ENCODE measurements at regions of chr9 and their contacts with region 1.

Region 1: DNA sequence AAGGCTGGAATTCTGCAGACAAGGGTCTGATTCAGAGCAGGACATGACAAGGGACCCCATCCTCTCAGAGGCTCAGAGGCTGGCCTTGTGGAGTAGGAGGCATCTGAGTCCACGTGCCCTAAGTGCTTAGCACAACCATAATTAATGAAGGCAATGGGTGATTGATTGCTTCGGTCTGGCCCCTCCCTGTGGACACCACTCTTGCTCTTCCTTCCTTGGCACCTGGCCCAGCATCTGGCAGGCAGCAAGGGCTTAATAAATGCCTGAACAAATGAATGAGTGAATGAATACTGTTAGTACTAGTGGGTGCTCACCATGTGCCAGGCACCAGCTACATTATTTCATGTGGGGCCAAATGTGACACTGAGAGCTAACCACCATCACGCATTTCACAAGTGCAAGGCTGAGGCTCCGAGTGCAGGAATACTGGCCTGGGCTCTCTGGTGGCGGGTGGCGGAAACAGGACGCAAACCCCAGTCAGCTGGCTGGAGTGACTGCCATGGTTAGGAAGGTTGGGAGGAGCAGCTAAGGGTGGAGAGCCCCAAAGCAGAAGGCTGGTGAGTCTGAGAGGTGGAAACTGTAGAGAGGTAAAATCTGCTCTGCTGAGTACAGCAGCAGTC is 53.6 kb downstream of the ASS1 start:
- DNase-seq: peak; percentile 26
- ATAC-seq: no peak
- H3K4me3 ChIP-seq: peak overlapping the region in 1 of 3 experiments; percentile 65; a peak in 1 of 6 replicates
- H3K27ac ChIP-seq: peak overlapping the region; percentile 95
- H3K4me1 ChIP-seq: peaks cover 42% of the 10 kb centered on the region
- H3K27me3 ChIP-seq: no peaks in the 10 kb centered on the region
- CTCF ChIP-seq: no peak
- EP300 ChIP-seq: no peak
- POLR2A ChIP-seq: no peak
- RAD21 ChIP-seq: no peak; the same call in 1 of the 2 replicates

Region 2: GRCh38 chr9:130461218-130461630 is 37.2 kb before region 1 on chr9:
- CTCF ChIA-PET with region 1: no interaction called
- POLR2A ChIA-PET with region 1: no interaction called
- in situ Hi-C with region 1: no loop called
- intact Hi-C with region 1: no loop called
- DNase-seq: peak; percentile 28
- ATAC-seq: peak; percentile 72
- H3K4me3 ChIP-seq: no peak overlapping the region
- H3K27ac ChIP-seq: no peak overlapping the region
- H3K4me1 ChIP-seq: peaks cover 12% of the 10 kb centered on the region
- H3K27me3 ChIP-seq: no peaks in the 10 kb centered on the region
- CTCF ChIP-seq: peak; percentile 99
- EP300 ChIP-seq: no peak
- POLR2A ChIP-seq: no peak
- RAD21 ChIP-seq: peak; percentile 98

Region 3: DNA sequence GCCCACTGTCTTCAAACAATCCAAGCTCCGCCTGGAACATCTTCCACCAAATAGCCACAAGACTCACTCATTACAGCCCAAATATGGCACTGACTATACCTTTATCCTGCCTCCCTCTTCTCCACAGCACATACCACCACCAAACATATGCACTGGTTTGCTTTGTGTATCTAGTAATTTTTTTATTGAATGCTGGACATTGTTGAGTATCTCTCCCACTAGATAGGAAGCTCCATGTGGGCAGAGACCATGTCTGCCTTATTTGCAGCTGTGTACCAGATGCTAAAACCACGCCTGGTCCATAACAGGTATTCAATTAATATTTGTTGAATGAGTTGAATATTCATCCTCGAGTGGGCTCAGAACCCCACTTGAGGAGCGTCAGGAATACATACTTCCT is 13.8 kb after region 1 on chr9:
- CTCF ChIA-PET with region 1: no interaction called
- POLR2A ChIA-PET with region 1: interaction called, 21 read pairs
- in situ Hi-C with region 1: no loop called
- intact Hi-C with region 1: no loop called
- DNase-seq: no peak
- ATAC-seq: no peak
- H3K4me3 ChIP-seq: no peak overlapping the region
- H3K27ac ChIP-seq: no peak overlapping the region
- H3K4me1 ChIP-seq: peaks cover 2% of the 10 kb centered on the region; the same call in 1 of the 2 replicates
- H3K27me3 ChIP-seq: peaks cover 2 to 3% of the 10 kb centered on the region in 2 experiments; a peak in 4 of 5 replicates
- CTCF ChIP-seq: no peak
- EP300 ChIP-seq: no peak
- POLR2A ChIP-seq: no peak
- RAD21 ChIP-seq: no peak

Region 4: DNA sequence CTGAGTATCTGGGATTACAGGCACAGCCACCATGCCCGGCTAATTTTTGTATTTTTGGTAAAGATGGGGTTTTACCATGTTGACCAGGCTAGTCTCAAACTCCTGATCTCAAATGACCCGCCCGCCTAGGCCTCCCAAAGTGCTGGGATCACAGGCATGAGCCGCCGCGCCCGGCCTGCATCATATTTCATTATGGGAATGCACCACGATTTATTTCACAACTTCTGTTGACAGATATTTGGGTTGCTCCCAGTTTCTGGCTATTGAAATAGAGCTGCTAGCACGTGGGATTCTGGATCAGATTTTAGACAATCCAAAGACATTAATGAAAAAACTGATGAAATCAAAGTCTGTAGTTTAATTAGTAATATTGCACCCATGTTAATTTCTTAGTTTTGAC is 32.5 kb after region 1 on chr9:
- CTCF ChIA-PET with region 1: no interaction called
- POLR2A ChIA-PET with region 1: interaction called, 86 read pairs
- in situ Hi-C with region 1: no loop called
- intact Hi-C with region 1: no loop called
- DNase-seq: peak; percentile 36
- ATAC-seq: no peak
- H3K4me3 ChIP-seq: no peak overlapping the region
- H3K27ac ChIP-seq: no peak overlapping the region
- H3K4me1 ChIP-seq: peaks cover 66% of the 10 kb centered on the region
- H3K27me3 ChIP-seq: no peaks in the 10 kb centered on the region; a peak in 1 of 5 replicates
- CTCF ChIP-seq: no peak
- EP300 ChIP-seq: no peak
- POLR2A ChIP-seq: no peak
- RAD21 ChIP-seq: no peak

Region 5: DNA sequence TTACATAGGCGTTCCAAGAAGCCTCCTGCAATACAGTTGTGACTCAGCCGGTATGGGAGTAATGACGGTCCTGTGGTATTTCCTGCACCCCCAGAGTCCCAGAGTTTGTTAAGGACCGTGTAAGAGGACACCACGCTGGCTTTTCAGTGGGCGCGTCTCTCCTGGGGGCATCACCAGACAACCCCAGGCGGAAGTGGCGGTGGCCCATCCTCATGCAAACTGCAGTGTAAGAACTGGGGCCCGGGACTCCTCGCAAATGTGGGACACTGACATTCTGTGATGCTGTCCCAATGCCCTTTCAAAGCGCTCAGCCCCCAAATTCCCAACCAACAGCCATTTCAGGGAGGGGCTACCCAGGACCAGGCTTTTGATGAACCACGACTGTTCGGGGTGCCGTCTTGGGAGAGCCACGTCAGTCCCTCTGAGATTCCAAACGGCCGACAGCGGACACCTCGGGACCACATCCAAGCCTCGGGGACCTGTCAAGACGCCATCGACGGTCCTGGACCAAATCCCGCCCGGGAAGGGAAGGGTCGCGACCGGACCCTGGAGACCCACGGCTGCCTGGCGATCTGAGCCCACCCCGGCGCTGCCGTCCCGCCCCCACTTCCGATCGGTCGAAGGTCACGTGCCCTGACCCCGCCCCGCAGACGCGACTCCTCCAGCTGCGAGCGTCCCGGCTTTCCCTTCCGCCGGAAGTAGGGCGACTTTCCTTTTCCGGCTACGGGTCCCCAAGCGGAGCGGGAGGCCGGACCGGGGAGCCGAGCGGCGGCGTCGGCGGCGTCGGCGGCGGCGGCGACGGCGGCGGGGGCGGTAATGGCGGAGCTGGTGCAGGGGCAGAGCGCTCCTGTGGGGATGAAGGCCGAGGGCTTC is 80.7 kb after region 1 on chr9 and contains the start of gene FUBP3:
- CTCF ChIA-PET with region 1: no interaction called
- POLR2A ChIA-PET with region 1: interaction called, 22 read pairs
- in situ Hi-C with region 1: no loop called
- intact Hi-C with region 1: no loop called
- DNase-seq: peak; percentile 84
- ATAC-seq: peak; percentile 94
- H3K4me3 ChIP-seq: peak within 1 kb of the TSS; percentile 97 to 98 (median 97)
- H3K27ac ChIP-seq: peak within 1 kb of the TSS; percentile 81
- H3K4me1 ChIP-seq: peaks cover 54% of the 10 kb centered on the region
- H3K27me3 ChIP-seq: no peaks in the 10 kb centered on the region; a peak in 2 of 5 replicates
- CTCF ChIP-seq: no peak
- EP300 ChIP-seq: no peak
- POLR2A ChIP-seq: peak; percentile 79 to 97
- RAD21 ChIP-seq: no peak
- total RNA-seq, gene FUBP3: 40.0 and 42.7 TPM in 2 replicates

Region 6: DNA sequence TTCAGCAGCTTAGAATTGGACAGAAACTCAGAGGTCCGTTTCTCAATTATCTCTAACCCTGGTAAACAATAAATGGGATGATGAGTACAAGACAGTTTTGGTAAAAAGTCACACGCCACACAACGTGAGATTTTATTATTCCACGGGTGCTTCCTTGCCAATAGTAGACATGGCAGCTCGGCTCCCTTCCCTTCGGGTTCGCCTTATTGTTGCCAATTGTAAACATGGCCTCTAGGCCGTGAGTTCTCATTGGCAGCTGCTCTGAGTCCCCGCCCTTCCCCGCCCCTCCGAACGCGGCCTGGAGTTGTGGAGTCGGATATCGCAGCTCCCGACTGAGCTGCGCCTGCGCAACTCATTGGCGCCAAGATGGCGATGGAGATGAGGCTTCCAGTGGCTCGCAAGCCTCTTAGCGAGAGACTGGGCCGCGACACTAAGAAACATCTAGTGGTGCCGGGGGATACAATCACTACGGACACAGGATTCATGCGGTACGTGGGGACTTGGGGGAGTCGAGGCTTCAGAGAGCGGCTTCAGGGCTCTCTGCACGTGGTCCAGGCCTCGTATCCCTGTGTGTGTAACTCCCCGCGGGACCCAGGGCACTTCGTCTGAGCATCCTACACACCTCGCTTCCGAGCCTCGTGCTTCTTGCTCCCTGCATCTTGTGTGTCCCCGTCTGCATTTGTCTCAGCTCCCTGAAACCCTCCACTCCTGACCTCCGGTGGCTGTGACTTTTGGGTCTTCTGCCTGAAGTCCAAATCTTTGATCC is 195.2 kb after region 1 on chr9 and contains the start of gene EXOSC2:
- CTCF ChIA-PET with region 1: no interaction called
- POLR2A ChIA-PET with region 1: interaction called, 17 read pairs
- in situ Hi-C with region 1: no loop called
- intact Hi-C with region 1: no loop called
- DNase-seq: peak; percentile 95
- ATAC-seq: peak; percentile 86
- H3K4me3 ChIP-seq: peak within 1 kb of the TSS; percentile 77 to 97 (median 89)
- H3K27ac ChIP-seq: peak within 1 kb of the TSS; percentile 67
- H3K4me1 ChIP-seq: peaks cover 59% of the 10 kb centered on the region
- H3K27me3 ChIP-seq: peaks cover 0 to 3% of the 10 kb centered on the region in 2 experiments; a peak in 1 of 5 replicates
- CTCF ChIP-seq: no peak
- EP300 ChIP-seq: no peak
- POLR2A ChIP-seq: peak; percentile 93 to 94
- RAD21 ChIP-seq: no peak
- total RNA-seq, gene EXOSC2: 63.8 and 74.2 TPM in 2 replicates

Measured in HepG2 (cell line).